OCI-LY7 (cell line): ENCODE measurements at regions of chr2 and their contacts with region 1.

Region 1: DNA sequence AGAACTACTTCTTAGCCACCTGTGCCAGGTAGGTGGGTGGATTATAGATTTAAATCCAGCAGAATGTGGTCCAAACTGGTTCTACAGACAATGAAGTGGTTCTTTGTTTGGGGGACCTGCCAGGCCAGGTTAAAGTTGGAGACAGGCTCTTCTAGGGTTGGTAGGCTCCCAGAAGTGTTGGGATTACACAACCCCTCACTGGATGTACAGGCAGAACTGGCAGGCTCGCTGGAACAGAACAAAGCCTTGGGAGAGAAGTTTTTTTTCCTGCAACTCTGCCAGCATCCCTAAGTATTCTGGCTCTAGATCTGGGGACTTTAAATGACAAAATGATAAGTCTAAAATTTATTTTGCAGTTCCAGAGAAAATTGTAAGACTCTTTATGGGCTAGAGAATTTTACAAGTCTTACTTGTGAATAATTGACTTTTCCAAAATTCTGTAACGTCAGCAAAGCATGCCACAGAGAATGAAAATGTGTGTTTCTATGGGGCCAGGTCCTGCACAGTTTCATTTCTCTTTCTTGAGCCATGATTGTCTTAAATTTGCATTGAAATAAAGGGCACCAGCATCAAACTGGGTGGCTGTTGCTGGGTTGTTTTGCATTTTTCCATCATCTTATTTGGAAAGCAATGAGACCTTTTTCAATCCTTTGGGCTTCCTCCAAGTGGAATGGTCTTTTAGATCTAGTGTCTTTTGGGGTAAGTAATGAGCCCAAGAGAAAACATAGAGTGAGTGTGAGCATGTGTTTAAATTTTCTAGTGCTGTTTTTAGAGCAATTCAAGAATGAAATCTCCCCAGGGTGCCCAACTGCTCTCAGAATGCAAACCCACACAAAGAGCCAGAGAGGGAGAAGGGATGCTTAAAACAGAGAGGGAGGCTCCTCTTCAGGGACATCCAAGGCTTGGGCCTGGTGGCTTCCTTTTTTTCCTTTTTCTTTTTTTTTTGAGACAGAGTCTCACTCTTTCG is 32.4 kb upstream of the ATL2 start:
- DNase-seq: peak; percentile 87
- H3K4me3 ChIP-seq: peak overlapping the region; percentile 63
- H3K27ac ChIP-seq: peak overlapping the region; percentile 100
- H3K4me1 ChIP-seq: peaks cover 57% of the 10 kb centered on the region
- CTCF ChIP-seq: no peak

Region 2: DNA sequence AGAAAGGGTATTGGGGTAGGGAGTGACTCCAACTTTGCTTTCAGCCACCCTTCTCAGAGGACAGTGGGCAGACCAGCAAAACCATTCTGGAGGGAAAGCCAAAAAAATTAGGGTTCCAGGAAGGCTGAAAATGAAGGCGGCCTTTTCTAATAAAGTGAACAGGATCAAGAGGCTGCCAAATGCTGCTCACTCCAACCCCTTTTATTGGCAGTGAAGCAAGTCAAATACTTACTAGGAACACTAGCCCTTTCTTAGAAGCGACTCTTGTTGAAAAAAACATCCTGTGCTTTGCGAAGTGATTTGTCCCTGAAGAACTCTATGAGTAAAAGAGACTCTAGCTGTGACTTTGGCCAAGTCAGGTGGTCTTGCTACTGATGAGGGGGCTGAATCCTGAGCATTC is 249.8 kb before region 1 on chr2:
- CTCF ChIA-PET with region 1: no interaction called
- POLR2A ChIA-PET with region 1: no interaction called
- intact Hi-C with region 1: no loop called
- DNase-seq: no peak
- H3K4me3 ChIP-seq: no peak overlapping the region
- H3K27ac ChIP-seq: no peak overlapping the region
- H3K4me1 ChIP-seq: no peaks in the 10 kb centered on the region
- CTCF ChIP-seq: no peak

Region 3: GRCh38 chr2:38394903-38395341 is 14.5 kb before region 1 on chr2:
- CTCF ChIA-PET with region 1: no interaction called
- POLR2A ChIA-PET with region 1: interaction called, 13 read pairs
- intact Hi-C with region 1: no loop called
- DNase-seq: no peak
- H3K4me3 ChIP-seq: peak overlapping the region; percentile 19
- H3K27ac ChIP-seq: no peak overlapping the region
- H3K4me1 ChIP-seq: peaks cover 32% of the 10 kb centered on the region
- CTCF ChIP-seq: no peak

Region 4: DNA sequence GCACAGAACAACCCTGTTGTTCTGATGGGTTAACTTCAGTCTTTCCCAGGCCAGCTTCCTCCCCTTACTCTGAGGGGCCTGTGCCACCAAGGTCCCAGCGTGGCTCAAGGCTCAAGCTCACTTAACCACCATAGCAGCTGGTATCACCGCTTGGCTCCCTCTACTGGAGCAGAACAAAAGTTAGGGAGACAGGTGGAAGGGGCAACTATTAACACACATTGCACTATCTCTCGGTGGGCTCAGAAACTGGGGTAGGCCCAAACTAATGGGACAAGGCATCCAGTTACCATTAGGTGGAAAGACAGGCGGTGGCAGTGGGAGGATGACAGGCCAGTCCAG is 56.3 kb after region 1 on chr2:
- CTCF ChIA-PET with region 1: interaction called, 10 read pairs
- POLR2A ChIA-PET with region 1: no interaction called
- intact Hi-C with region 1: loop called (anchors 1 kb)
- DNase-seq: peak; percentile 88
- H3K4me3 ChIP-seq: no peak overlapping the region
- H3K27ac ChIP-seq: peak overlapping the region; percentile 13
- H3K4me1 ChIP-seq: peaks cover 24% of the 10 kb centered on the region
- CTCF ChIP-seq: peak; percentile 90

Region 5: GRCh38 chr2:38528008-38528442 is 118.6 kb after region 1 on chr2:
- CTCF ChIA-PET with region 1: no interaction called
- POLR2A ChIA-PET with region 1: no interaction called
- intact Hi-C with region 1: loop called (anchors 5 kb)
- DNase-seq: peak; percentile 72
- H3K4me3 ChIP-seq: peak overlapping the region; percentile 44
- H3K27ac ChIP-seq: peak overlapping the region; percentile 84
- H3K4me1 ChIP-seq: peaks cover 83% of the 10 kb centered on the region
- CTCF ChIP-seq: peak; percentile 47

Region 6: DNA sequence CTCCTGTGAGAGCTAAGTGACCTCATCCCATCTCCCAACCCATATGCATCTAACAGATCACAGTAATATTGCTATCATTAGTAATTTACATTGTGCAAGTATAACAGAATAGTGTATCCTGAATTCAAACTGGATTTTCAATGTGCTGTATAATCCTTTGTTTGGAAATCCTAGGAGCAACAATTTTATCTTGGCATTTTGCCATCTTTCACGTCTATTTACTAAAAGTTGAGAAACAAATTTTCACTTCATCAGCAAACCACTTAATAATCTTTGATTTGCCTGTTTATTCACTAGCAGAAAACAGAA is 189.5 kb after region 1 on chr2:
- CTCF ChIA-PET with region 1: no interaction called
- POLR2A ChIA-PET with region 1: no interaction called
- intact Hi-C with region 1: no loop called
- DNase-seq: no peak
- H3K4me3 ChIP-seq: no peak overlapping the region
- H3K27ac ChIP-seq: no peak overlapping the region
- H3K4me1 ChIP-seq: peaks cover 34% of the 10 kb centered on the region
- CTCF ChIP-seq: no peak